IMR-90 (cell line): ENCODE measurements at regions of chrX and their contacts with region 1.

Region 1: DNA sequence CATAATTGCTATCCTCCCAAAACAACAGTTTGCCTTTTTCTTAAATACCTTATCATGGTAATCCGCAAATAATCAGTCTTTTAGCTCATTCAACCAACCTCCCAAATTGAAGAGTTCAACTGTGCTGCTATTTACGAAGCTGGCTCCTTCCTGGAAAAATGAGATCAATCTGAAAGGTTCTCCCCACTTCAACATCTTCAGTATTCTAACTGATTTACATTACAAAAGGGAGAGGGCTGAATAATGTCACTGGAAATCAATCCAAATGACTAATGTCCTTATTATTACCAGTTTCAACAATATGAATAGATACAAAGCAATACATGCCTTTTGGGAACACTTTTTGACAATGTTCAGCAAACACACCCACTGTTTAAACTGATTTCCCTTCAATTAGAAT is 86.2 kb downstream of the WNK3 start:
- DNase-seq: no peak
- ATAC-seq: no peak
- H3K4me3 ChIP-seq: no peak overlapping the region
- H3K27ac ChIP-seq: no peak overlapping the region
- H3K4me1 ChIP-seq: no peaks in the 10 kb centered on the region
- H3K27me3 ChIP-seq: no peaks in the 10 kb centered on the region
- CTCF ChIP-seq: no peak
- POLR2A ChIP-seq: no peak
- RAD21 ChIP-seq: no peak

Region 2: GRCh38 chrX:53237056-53237455 is 1034.6 kb before region 1 on chrX:
- CTCF ChIA-PET with region 1: no interaction called
- POLR2A ChIA-PET with region 1: no interaction called
- dilution Hi-C with region 1: no loop called
- in situ Hi-C with region 1: no loop called
- intact Hi-C with region 1: no loop called
- DNase-seq: no peak
- ATAC-seq: no peak
- H3K4me3 ChIP-seq: no peak overlapping the region
- H3K27ac ChIP-seq: no peak overlapping the region
- H3K4me1 ChIP-seq: no peaks in the 10 kb centered on the region
- H3K27me3 ChIP-seq: peaks cover 21% of the 10 kb centered on the region
- CTCF ChIP-seq: no peak
- POLR2A ChIP-seq: no peak
- RAD21 ChIP-seq: no peak

Region 3: GRCh38 chrX:54208531-54208930 is 63.1 kb before region 1 on chrX:
- CTCF ChIA-PET with region 1: no interaction called
- POLR2A ChIA-PET with region 1: no interaction called
- dilution Hi-C with region 1: no loop called
- in situ Hi-C with region 1: no loop called
- intact Hi-C with region 1: loop called (anchors 10 kb)
- DNase-seq: peak; percentile 63
- ATAC-seq: peak; percentile 46
- H3K4me3 ChIP-seq: no peak overlapping the region
- H3K27ac ChIP-seq: no peak overlapping the region
- H3K4me1 ChIP-seq: no peaks in the 10 kb centered on the region
- H3K27me3 ChIP-seq: no peaks in the 10 kb centered on the region; the same call in 1 of the 2 replicates
- CTCF ChIP-seq: no peak
- POLR2A ChIP-seq: no peak
- RAD21 ChIP-seq: no peak

Region 4: DNA sequence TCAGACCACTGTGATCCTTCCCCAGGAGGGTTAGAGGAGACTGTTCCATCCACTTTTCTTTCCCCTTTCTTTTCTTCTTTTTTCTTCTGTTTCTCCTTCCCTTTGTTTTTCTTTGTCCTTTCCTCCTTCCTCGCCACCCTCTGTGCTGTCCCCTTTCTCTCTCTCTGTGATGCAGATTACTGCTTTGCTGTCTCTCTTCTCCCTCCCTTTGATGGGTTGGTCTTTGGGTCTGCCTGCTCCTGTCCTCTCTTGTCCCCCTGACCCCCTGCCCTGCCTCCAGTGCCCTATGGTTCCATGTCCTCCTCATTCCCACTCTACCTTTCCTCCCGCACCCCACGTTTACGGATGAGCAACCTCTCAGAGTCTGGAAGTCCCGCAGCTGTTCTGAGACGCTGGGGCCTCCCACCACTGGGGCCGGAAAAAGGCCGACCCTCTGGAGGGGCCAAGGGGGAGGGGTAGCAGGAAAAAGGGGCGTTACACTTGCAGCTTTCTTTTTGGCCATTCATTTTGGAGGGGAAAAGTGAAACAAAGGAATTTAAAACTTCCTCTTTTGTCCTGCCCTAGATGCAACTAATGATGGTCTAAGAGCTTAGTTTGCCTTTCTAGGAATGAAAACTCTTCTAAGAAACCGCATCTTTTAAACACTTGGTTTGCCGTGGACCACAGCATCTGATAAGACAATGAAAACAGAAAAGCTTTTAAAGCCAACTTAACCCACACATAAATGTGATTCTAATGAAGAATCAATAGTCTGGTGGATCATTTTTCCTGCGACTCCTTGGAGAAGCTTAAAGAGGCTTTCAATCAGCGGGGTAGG is 144.1 kb after region 1 on chrX:
- CTCF ChIA-PET with region 1: no interaction called
- POLR2A ChIA-PET with region 1: no interaction called
- dilution Hi-C with region 1: no loop called
- in situ Hi-C with region 1: no loop called
- intact Hi-C with region 1: loop called (anchors 10 kb)
- DNase-seq: peak; percentile 7
- ATAC-seq: no peak
- H3K4me3 ChIP-seq: no peak overlapping the region
- H3K27ac ChIP-seq: no peak overlapping the region
- H3K4me1 ChIP-seq: no peaks in the 10 kb centered on the region
- H3K27me3 ChIP-seq: peaks cover 19% of the 10 kb centered on the region
- CTCF ChIP-seq: no peak
- POLR2A ChIP-seq: no peak
- RAD21 ChIP-seq: no peak

Region 5: DNA sequence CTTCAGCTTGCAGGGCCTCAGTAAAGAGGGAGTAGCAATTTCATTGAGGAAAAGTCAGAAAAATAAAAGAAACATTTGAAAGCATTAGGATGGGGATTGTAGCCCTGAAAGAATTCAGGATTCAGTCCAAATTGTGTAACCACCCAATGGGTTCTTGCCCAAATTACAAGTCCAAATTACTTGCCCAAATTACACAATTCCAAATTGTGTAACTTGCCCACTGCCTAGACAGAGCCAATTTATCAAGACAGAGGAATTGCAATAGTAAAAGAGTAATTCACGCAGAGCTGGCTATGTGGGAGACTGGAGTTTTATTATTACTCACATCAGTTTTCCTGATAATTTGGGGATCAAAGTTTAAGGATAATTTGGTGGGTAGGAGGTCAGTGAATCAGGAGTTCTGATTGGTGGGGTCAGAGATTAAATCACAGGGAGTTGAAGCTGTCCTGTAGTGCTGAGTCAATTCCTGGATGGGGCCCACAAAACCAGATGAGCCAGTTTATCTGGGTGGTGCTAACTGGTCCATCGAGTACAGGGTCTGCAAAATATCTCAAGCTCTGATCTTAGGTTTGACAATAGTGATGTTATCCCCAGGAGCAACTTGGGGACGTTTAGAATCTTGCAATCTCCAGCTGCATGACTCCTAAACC is 930.4 kb after region 1 on chrX:
- CTCF ChIA-PET with region 1: no interaction called
- POLR2A ChIA-PET with region 1: no interaction called
- dilution Hi-C with region 1: no loop called
- in situ Hi-C with region 1: no loop called
- intact Hi-C with region 1: no loop called
- DNase-seq: no peak
- ATAC-seq: no peak
- H3K4me3 ChIP-seq: no peak overlapping the region
- H3K27ac ChIP-seq: no peak overlapping the region
- H3K4me1 ChIP-seq: no peaks in the 10 kb centered on the region
- H3K27me3 ChIP-seq: no peaks in the 10 kb centered on the region
- CTCF ChIP-seq: no peak
- POLR2A ChIP-seq: no peak
- RAD21 ChIP-seq: no peak